ENCODE measurements at regions of chr10 and their contacts with region 1.

Region 1: DNA sequence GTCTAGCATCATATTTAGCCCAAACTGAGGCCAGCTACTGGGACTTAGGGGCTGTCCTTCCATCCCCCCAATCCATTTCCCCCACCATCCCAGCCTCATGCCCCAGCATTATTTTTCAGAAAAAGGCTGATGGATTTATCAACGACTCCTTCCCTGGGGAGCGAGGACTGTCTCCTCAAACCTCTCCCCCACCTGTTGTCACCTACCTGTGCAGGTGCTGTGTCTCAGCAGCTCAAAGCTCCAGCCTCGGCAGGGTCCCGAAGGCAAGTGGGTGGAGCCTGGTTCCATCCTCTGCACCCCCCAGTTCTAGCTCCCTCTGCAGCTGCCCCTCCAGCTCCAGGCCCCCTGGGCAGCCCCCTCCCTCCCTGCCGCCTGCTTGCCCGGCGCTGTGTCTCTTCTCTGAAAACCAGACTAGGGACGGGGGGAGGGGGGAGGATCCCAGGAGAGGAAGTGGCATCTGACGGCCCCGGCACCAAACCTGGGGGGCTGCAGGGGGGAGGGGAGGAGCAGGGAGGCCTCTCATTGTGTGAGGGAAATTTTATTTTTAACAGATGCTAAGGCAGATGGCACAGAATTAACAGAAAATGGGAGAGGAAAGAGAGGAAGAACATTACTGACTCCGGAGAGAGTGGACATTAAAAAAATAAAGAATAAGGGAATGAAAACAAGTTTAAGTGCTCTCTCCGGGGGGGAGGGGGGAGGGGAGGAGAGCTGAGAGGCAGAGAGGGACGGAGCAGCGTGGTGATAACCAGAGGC is 61.7 kb upstream of the PAX2 start:
- DNase-seq: no peak
- H3K4me3 ChIP-seq: no peak overlapping the region
- H3K4me3 Mint-ChIP-seq: no peak overlapping the region
- H3K27ac Mint-ChIP-seq: no peak overlapping the region
- H3K4me1 ChIP-seq: no peaks in the 10 kb centered on the region
- H3K4me1 Mint-ChIP-seq: no peaks in the 10 kb centered on the region
- H3K27me3 ChIP-seq: peaks cover 6% of the 10 kb centered on the region
- H3K27me3 Mint-ChIP-seq: peaks cover 45% of the 10 kb centered on the region
- CTCF ChIP-seq: no peak

Region 2: DNA sequence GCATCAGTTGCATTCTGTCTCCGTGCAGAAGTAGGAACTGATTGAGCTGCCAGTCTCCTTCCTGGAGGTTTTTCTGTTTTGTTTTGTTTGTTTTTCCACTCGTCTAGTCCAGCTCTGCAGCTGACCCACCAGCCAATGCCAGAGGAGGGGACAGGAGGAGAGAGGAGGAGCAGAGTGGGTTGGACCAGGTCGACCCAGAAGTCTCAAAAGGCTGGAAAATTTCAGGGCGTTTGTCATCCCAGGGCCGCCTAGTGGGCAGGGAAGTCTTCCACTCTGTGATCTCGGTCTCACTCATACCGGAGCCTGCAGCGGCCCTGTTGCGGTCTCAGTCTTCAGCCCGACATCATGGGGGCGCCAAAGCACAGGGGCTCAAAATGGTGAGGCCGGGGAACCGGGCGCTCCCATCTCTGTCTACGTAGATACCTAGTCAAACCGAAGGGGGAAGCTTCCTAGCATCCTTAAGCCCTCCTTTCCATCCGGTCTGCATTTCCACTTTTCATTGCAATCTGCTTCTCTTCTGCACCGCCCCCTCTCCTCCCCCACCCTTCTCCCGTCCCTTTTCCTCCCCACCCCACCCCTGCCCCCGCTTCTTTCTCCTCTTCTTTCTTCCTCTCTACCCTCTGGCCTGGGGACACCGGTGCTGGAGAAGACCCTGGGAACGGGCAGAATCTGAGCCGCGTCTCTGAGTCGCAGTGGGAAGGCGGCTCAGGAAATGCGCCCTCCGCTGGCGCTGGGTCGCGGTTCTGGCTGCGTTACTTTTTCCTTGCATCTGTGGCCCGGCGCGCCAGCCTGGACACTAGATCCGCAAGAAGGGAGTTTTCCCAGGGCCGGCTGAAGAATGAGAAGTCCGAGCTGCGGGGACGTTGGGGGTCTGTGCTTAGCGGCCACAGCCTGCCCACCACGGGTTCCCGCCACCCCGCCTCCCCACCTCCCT is 45.5 kb after region 1 on chr10:
- CTCF ChIA-PET with region 1: interaction called, 6 read pairs
- POLR2A ChIA-PET with region 1: no interaction called
- intact Hi-C with region 1: loop called (anchors 5 kb)
- DNase-seq: peak; percentile 83 to 86
- H3K4me3 ChIP-seq: peak overlapping the region; percentile 48
- H3K4me3 Mint-ChIP-seq: peak overlapping the region; percentile 79
- H3K27ac Mint-ChIP-seq: no peak overlapping the region
- H3K4me1 ChIP-seq: peaks cover 32% of the 10 kb centered on the region
- H3K4me1 Mint-ChIP-seq: peaks cover 28% of the 10 kb centered on the region
- H3K27me3 ChIP-seq: no peaks in the 10 kb centered on the region
- H3K27me3 Mint-ChIP-seq: peaks cover 3% of the 10 kb centered on the region
- CTCF ChIP-seq: peak; percentile 60 to 85

Measured in Caco-2 (cell line).